Dorsolateral prefrontal cortex (tissue), 120 donors: ENCODE measurements at regions of chr20 and their contacts with region 1.

Region 1: DNA sequence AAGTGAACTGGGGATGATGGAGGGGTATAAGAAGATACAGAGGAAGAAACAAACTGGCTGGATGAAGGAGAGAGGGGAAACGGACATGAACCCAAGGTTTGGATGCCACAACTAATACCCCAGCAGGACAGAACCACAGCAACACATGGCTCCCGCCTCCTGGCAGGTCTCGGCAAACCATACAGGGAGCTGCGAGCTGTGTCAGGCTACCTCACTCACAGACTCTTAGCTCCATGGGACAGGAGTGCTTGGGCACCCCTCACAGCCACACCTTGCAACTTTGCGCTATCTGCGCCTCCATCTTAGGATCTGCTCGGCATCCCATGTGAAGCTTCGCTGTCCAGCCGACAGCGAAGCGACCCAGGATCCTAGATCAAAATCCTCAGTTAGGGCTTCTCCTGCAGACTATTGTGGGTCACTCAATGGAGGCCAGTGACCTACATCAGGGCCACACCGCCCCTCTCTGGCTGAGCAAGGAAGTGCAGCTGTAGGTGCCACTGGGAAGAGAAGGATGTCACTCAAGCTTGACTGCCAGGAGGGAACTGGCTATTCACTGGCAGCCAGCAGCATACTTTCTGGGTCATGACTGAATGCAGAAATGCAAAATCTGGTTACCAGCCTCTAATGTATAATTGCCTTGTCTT is 174.4 kb upstream of the RIN2 start:
- DNase-seq: peak in 7 of 10 donors; percentile 19 to 65 (median 44)
- H3K4me3 ChIP-seq: no peak overlapping the region
- H3K27ac ChIP-seq: no peak overlapping the region
- H3K27me3 ChIP-seq: peaks cover 0 to 10% (median 0%) of the 10 kb centered on the region in 45 donors
- CTCF ChIP-seq: peak in 55 of 56 donors; percentile 16 to 79 (median 62)

Region 2: DNA sequence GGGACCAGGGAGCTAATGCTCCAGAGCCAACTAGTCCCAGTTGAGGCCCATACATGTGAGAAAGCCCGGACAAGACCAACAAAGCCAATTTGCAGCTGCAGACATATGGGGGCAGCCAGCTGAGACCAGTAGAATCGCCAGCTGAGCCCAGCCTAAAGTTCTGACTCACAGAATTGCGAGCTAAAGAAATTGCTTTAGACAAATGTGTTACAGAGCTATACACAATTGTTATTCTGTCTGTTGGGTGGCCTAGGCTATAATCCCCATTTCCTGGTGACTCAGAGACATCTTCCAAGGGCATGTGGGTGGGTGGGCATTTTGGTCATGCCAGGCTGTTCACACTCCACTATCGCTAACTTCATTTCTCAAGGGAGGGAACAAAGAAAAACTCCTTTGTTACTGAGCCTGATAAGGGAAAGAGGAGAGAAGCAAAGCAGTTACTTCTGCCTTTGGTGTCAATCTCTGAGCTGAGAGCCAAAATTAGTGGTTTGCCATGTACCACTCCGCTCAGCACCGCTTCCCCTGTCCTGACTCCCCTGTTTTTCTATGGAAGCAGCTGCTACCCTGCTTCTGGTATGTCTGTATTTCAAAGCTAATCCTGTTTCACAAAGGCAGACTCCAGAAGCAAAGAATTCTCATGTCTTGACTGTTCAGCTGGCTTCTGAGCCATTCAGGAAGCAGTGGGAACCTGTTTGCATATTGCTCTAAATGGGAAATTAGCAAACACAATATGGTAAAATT is 744.0 kb before region 1 on chr20:
- intact Hi-C with region 1: no loop called
- DNase-seq: no peak
- H3K4me3 ChIP-seq: no peak overlapping the region
- H3K27ac ChIP-seq: no peak overlapping the region
- H3K27me3 ChIP-seq: no peaks in the 10 kb centered on the region
- CTCF ChIP-seq: no peak

Region 3: DNA sequence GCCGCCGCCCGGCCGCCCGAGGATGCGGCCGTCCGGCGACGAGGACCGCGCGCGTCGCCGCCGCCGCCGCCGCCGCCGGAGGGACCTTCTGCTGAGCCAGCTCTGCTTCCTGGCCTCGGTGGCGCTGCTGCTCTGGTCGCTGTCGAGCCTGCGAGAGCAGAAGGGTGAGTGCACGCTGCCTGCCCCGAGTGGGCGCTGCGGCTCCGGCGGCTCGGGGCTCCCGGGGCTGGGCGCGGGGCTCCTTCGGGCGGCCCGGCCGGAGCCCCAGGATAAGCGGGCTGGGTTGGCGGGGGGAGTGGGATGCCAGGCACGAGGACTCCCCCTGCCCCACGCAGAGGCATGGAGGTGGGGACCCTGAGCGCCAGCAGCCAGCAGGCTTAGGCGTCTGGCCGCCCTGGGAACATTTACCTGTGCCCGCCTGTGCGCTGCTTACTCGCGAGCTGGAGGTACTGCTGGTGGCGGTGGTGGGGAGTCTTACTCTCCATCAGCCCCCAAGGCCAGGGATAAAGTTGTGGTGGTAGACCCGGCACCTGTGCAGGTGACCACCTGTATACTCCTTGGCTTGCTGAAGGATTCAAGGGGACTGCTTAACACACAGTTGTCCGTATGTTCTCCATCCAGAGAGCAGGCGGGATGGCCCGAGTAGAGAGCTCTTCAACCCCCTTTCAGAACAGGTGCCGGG is 370.7 kb before region 1 on chr20:
- intact Hi-C with region 1: loop called in 1 of 2 experiments (anchors 10 kb)
- DNase-seq: peak in 8 of 10 donors; percentile 17 to 69 (median 58)
- H3K4me3 ChIP-seq: peak overlapping the region; percentile 14 to 69 (median 54)
- H3K27ac ChIP-seq: peak overlapping the region in 7 of 59 donors; percentile 8 to 55 (median 22)
- H3K27me3 ChIP-seq: peaks cover 0 to 56% (median 22%) of the 10 kb centered on the region in 45 donors
- CTCF ChIP-seq: peak in 37 of 56 donors; percentile 11 to 39 (median 28)